CD4-positive, alpha-beta memory T cell (primary cell): ENCODE measurements at regions of chr3 and their contacts with region 1.

Region 1: DNA sequence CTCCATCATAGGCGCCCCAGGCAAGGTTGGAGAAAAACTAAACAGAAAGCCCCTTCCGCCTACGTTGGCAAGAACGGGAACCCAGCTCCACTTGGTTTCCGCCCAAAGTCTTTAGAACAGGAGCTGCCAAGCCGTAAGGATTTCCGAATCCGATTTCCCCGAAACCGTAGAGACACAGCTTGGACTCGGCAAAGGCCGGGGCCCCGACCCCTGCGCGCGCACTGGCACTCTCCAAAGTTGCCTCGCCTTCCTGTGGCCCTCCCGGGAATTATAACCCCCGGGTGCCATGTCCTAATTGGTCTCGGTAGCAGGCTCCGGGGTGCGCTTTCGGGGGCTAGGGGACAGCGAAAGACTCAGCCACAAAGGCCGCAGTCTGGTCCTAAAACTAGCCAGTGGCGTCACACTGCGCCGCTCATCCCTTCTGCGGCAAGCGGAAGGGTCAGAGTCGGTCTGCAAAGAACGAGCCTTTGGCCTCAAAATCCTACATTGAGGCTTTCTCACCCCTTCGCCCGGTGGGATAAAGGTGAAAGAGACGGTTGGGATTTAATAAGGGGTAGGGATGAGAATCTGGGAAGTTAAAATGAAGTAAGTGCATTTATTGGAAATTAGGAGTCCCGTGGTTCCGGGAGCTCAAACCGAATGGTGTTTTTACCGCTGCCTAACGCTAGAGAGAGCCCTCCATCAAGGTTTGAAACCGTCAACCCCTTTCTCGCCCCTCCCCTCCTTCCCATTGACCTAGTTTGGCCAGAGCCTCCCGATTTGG is 6.8 kb downstream of the BCL6 start:
- DNase-seq: peak; percentile 65 to 78 (median 67)
- H3K4me3 ChIP-seq: peak overlapping the region; percentile 88 to 89
- H3K4me3 Mint-ChIP-seq: peak overlapping the region; percentile 95 to 99 (median 96)
- H3K27ac ChIP-seq: peak overlapping the region; percentile 73
- H3K27ac Mint-ChIP-seq: peak overlapping the region; percentile 77 to 99 (median 94)
- H3K4me1 ChIP-seq: peaks cover 34% of the 10 kb centered on the region
- H3K4me1 Mint-ChIP-seq: peaks cover 22 to 58% (median 36%) of the 10 kb centered on the region in 4 donors
- H3K27me3 ChIP-seq: no peaks in the 10 kb centered on the region
- H3K27me3 Mint-ChIP-seq: no peaks in the 10 kb centered on the region

Region 2: GRCh38 chr3:187831125-187832051 is 92.9 kb after region 1 on chr3:
- CTCF ChIA-PET with region 1: no interaction called
- POLR2A ChIA-PET with region 1: no interaction called
- intact Hi-C with region 1: loop called (anchors 5 kb)
- DNase-seq: no peak
- H3K4me3 ChIP-seq: no peak overlapping the region
- H3K4me3 Mint-ChIP-seq: no peak overlapping the region
- H3K27ac ChIP-seq: no peak overlapping the region
- H3K27ac Mint-ChIP-seq: no peak overlapping the region
- H3K4me1 ChIP-seq: no peaks in the 10 kb centered on the region
- H3K4me1 Mint-ChIP-seq: peaks cover 7 to 10% (median 9%) of the 10 kb centered on the region in 4 donors
- H3K27me3 ChIP-seq: no peaks in the 10 kb centered on the region
- H3K27me3 Mint-ChIP-seq: no peaks in the 10 kb centered on the region

Region 3: DNA sequence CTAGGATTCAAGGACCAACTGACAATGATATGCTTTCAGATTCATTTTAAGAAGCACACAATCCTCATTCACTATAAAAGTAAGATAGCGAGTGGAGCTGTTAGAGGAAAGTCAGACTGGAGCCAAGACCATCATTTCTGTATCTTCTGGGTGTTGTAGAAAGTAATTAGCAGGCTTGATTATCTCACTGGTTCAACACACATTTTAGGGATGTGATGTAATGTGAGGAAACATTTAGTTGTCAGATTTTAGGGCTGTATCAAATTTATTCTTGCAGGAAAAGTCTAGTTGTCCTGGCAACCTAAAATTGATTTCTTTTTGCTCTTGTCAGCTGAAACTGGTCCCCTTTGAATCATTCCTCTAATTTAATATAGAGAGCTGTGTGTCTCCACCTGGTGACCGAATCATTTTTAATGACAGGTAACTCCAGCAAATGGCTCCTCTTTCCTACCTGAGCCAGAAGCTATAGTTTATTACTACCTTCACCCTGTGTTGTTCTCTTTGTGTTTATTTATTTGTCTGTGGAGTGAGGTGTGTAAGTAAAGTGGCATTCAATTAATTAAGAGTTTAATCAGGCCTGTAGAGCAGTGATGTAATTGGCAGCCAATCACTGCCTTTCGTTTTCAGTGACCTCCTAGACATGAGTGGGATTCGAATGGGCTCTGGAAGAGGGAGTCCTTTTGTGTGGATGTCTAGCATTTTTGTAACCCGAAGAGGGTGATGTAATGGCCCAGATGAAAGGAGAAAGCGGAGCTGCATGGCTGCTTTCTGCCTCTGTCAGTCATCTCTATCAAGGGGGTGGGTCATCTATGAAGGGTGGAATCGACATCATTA is 541.2 kb after region 1 on chr3:
- CTCF ChIA-PET with region 1: interaction called, 31 read pairs
- POLR2A ChIA-PET with region 1: interaction called, 5 read pairs
- intact Hi-C with region 1: loop called (anchors 1 kb)
- DNase-seq: no peak
- H3K4me3 ChIP-seq: no peak overlapping the region
- H3K4me3 Mint-ChIP-seq: no peak overlapping the region
- H3K27ac ChIP-seq: no peak overlapping the region
- H3K27ac Mint-ChIP-seq: peak overlapping the region in 1 of 7 donors; percentile 23
- H3K4me1 ChIP-seq: peaks cover 8% of the 10 kb centered on the region
- H3K4me1 Mint-ChIP-seq: peaks cover 20 to 36% (median 21%) of the 10 kb centered on the region in 4 donors
- H3K27me3 ChIP-seq: no peaks in the 10 kb centered on the region
- H3K27me3 Mint-ChIP-seq: no peaks in the 10 kb centered on the region

Region 4: GRCh38 chr3:188664795-188665194 is 926.3 kb after region 1 on chr3:
- CTCF ChIA-PET with region 1: interaction called, 46 read pairs
- POLR2A ChIA-PET with region 1: no interaction called
- intact Hi-C with region 1: loop called (anchors 1 kb)
- DNase-seq: peak in 1 of 5 donors; percentile 6
- H3K4me3 ChIP-seq: no peak overlapping the region
- H3K4me3 Mint-ChIP-seq: no peak overlapping the region
- H3K27ac ChIP-seq: no peak overlapping the region
- H3K27ac Mint-ChIP-seq: no peak overlapping the region
- H3K4me1 ChIP-seq: no peaks in the 10 kb centered on the region
- H3K4me1 Mint-ChIP-seq: peaks cover 0 to 7% (median 5%) of the 10 kb centered on the region in 4 donors
- H3K27me3 ChIP-seq: no peaks in the 10 kb centered on the region
- H3K27me3 Mint-ChIP-seq: no peaks in the 10 kb centered on the region

Region 5: GRCh38 chr3:188914552-188914951 is 1176.0 kb after region 1 on chr3:
- CTCF ChIA-PET with region 1: interaction called, 39 read pairs
- POLR2A ChIA-PET with region 1: interaction called, 11 read pairs
- intact Hi-C with region 1: no loop called
- DNase-seq: no peak
- H3K4me3 ChIP-seq: no peak overlapping the region
- H3K4me3 Mint-ChIP-seq: no peak overlapping the region
- H3K27ac ChIP-seq: no peak overlapping the region
- H3K27ac Mint-ChIP-seq: peak overlapping the region in 3 of 7 donors; percentile 17 to 62 (median 58)
- H3K4me1 ChIP-seq: peaks cover 22% of the 10 kb centered on the region
- H3K4me1 Mint-ChIP-seq: peaks cover 24 to 37% (median 31%) of the 10 kb centered on the region in 4 donors
- H3K27me3 ChIP-seq: no peaks in the 10 kb centered on the region
- H3K27me3 Mint-ChIP-seq: no peaks in the 10 kb centered on the region

Region 6: DNA sequence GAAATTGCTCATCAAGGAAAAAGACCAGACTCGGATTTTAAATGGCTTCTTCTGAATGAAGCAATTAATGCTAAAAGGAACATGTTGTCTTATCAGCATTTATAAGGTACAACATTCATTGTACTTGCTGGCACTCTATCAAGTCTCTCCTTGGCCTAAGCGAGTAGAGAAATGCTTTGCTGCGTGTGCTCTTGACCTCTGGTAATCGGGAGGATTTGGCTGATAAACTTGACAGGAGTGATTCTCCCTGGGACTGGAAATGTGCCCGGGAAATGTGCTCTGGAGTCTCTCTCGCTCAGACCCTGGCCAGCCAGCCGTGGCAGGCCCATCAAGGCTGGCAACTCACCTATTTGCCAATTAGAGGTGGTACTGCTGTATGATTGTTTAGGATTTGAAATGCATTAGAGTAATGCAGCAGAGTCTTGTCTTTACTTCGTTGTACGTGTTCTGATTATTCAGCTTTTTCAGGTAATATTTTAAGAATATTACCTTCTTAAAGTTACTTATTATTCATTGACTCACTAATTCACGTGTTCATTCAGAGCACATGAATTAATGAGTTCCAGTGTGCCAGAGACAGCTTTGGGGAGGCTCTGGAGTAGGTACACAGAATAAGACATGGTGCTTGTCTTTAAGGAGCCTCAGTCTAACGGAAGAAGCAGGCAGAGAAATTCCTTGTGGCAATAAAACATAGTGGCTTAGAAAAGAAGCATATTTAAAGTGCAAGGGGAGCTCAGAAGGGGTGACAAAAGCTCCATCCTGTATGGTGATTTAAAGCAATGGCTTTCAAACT is 1385.3 kb after region 1 on chr3:
- CTCF ChIA-PET with region 1: interaction called, 66 read pairs
- POLR2A ChIA-PET with region 1: interaction called, 29 read pairs
- intact Hi-C with region 1: no loop called
- DNase-seq: no peak
- H3K4me3 ChIP-seq: no peak overlapping the region
- H3K4me3 Mint-ChIP-seq: peak overlapping the region in 6 of 8 donors; percentile 73 to 85 (median 78)
- H3K27ac ChIP-seq: no peak overlapping the region
- H3K27ac Mint-ChIP-seq: peak overlapping the region in 5 of 7 donors; percentile 7 to 93 (median 72)
- H3K4me1 ChIP-seq: peaks cover 45% of the 10 kb centered on the region
- H3K4me1 Mint-ChIP-seq: peaks cover 16 to 66% (median 34%) of the 10 kb centered on the region in 4 donors
- H3K27me3 ChIP-seq: no peaks in the 10 kb centered on the region
- H3K27me3 Mint-ChIP-seq: no peaks in the 10 kb centered on the region